ENCODE measurements at regions of chr4 and their contacts with region 1.

Region 1: GRCh38 chr4:177309522-177310371 is at the start of gene NEIL3:
- DNase-seq: peak; percentile 86 to 91
- H3K4me3 ChIP-seq: peak within 1 kb of the TSS; percentile 82
- H3K4me3 Mint-ChIP-seq: peak within 1 kb of the TSS; percentile 86
- H3K27ac Mint-ChIP-seq: peak within 1 kb of the TSS; percentile 90
- H3K4me1 ChIP-seq: peaks cover 8% of the 10 kb centered on the region; the same call in 1 of the 2 replicates
- H3K4me1 Mint-ChIP-seq: no peaks in the 10 kb centered on the region
- H3K27me3 ChIP-seq: no peaks in the 10 kb centered on the region
- H3K27me3 Mint-ChIP-seq: no peaks in the 10 kb centered on the region
- CTCF ChIP-seq: no peak
- total RNA-seq, gene NEIL3: 8.0 and 8.5 TPM in 2 replicates

Region 2: GRCh38 chr4:177266506-177266905 is 43.2 kb before region 1 on chr4:
- CTCF ChIA-PET with region 1: no interaction called
- POLR2A ChIA-PET with region 1: interaction called, 17 read pairs
- intact Hi-C with region 1: no loop called
- DNase-seq: no peak
- H3K4me3 ChIP-seq: no peak overlapping the region
- H3K4me3 Mint-ChIP-seq: no peak overlapping the region
- H3K27ac Mint-ChIP-seq: no peak overlapping the region
- H3K4me1 ChIP-seq: 0 out of 2 replicates have a peak, but pooled peaks cover 4% of the 10 kb centered on the region
- H3K4me1 Mint-ChIP-seq: no peaks in the 10 kb centered on the region
- H3K27me3 ChIP-seq: no peaks in the 10 kb centered on the region
- H3K27me3 Mint-ChIP-seq: no peaks in the 10 kb centered on the region
- CTCF ChIP-seq: no peak